ENCODE measurements at regions of chr17 and their contacts with region 1.

Region 1: DNA sequence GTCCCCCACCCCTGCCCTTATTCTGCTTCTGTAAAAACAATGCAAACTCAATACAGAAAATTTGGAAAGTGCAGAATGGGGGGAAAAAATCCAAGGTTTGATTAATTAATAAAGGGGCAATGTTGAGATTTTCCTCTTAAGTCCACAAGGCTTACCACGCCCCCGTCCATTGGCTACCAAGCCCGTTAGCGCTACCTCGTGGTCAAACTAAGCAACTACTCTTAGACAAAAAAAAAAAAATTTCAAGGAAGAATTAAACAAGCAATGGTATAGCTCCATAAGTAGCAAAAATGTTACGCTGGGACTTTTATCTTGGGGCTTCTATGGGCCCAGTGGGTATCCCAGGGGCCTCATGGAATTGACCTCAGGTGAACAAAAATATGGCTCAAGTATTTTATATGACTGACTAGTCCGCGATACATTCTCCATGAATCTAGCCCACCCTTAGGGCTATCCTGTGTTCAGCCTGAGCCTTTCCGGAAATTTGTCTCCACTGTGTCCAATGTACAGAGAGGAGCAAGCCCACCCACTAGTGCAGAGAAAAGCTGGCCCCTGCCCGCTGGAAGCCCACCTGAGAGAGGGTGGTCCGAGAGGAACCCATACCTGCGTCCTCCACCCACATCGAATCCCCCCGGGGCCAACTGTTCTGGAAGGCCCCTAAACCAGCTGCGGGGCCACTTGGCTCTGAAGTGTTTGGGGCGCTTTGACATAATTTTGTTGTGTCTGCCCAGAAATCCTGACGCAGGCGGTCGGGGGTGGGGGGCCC is 19.1 kb upstream of the TEX2 start:
- DNase-seq: peak; percentile 79
- H3K4me3 ChIP-seq: no peak overlapping the region
- H3K27ac ChIP-seq: no peak overlapping the region
- H3K4me1 ChIP-seq: peaks cover 17% of the 10 kb centered on the region
- CTCF ChIP-seq: peak; percentile 92

Region 2: DNA sequence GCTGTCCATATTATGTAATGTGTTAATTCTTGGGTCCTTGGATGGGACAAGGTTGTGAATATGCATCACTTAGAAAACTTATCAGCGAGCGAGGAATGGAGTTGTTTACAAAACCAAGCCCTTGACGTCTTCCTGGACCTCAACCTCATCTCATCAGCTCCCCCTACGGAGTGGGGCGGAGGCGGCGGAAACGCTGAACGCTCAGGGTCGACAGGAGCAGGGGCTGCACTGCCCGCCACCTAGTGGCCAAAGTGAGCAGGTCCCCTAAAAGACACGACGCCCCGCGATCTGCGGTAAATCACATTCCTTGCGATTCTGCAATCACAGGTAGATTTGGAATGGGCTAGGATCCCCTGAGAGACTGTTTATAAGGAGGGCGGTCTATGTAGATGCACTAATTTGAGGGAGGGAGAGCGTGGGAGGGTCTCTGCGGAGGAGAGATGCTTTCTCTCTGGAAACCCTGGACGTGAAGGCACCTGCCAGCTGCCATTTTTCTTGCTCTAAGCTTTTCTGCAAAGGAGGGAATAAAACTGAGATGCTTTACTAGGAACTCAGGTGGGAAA is 256.3 kb before region 1 on chr17:
- CTCF ChIA-PET with region 1: no interaction called
- POLR2A ChIA-PET with region 1: no interaction called
- intact Hi-C with region 1: loop called (anchors 5 kb)
- DNase-seq: peak; percentile 91
- H3K4me3 ChIP-seq: peak overlapping the region; percentile 20
- H3K27ac ChIP-seq: peak overlapping the region; percentile 20
- H3K4me1 ChIP-seq: peaks cover 73% of the 10 kb centered on the region
- CTCF ChIP-seq: peak; percentile 98

Region 3: DNA sequence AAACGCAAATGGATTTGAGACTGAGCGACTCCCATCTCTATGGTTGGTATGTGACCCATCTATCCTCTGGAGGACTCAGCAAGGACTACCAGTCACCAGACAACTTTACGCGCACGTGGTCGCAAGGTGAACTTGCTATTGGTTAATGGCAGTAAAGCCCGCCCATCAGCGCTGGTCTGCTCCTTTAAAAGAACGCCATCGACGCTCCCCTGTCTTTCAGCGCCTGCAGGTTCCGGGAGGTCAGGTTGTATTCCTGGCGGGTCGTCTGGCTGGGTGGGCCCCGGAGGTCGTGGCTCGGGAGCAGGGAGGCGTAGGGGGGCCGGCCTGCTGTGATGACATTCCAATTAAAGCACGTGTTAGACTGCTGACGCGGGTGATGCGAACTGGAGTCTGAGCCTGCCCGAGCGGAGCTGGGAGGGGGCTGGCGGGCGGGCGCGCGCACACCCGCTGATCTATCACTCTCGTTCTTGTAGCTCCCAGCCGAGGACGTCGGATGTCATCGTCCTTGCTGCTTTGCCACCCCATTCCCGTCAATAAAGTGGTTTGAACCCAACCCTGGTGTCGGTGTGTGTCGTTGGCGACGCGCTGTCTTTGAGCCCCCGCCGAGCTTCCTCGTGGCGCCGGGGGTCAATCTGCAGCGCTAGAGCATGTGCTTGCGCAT is 136.3 kb before region 1 on chr17:
- CTCF ChIA-PET with region 1: no interaction called
- POLR2A ChIA-PET with region 1: interaction called, 3 read pairs
- intact Hi-C with region 1: loop called (anchors 2 kb)
- DNase-seq: peak; percentile 100
- H3K4me3 ChIP-seq: peak overlapping the region; percentile 84
- H3K27ac ChIP-seq: peak overlapping the region; percentile 93
- H3K4me1 ChIP-seq: peaks cover 30% of the 10 kb centered on the region
- CTCF ChIP-seq: peak; percentile 24; the same call in 1 of the 2 replicates

Measured in OCI-LY7 (cell line).